Upper lobe of right lung (tissue), 1 donor: ENCODE measurements at regions of chr3 and their contacts with region 1.

Region 1: DNA sequence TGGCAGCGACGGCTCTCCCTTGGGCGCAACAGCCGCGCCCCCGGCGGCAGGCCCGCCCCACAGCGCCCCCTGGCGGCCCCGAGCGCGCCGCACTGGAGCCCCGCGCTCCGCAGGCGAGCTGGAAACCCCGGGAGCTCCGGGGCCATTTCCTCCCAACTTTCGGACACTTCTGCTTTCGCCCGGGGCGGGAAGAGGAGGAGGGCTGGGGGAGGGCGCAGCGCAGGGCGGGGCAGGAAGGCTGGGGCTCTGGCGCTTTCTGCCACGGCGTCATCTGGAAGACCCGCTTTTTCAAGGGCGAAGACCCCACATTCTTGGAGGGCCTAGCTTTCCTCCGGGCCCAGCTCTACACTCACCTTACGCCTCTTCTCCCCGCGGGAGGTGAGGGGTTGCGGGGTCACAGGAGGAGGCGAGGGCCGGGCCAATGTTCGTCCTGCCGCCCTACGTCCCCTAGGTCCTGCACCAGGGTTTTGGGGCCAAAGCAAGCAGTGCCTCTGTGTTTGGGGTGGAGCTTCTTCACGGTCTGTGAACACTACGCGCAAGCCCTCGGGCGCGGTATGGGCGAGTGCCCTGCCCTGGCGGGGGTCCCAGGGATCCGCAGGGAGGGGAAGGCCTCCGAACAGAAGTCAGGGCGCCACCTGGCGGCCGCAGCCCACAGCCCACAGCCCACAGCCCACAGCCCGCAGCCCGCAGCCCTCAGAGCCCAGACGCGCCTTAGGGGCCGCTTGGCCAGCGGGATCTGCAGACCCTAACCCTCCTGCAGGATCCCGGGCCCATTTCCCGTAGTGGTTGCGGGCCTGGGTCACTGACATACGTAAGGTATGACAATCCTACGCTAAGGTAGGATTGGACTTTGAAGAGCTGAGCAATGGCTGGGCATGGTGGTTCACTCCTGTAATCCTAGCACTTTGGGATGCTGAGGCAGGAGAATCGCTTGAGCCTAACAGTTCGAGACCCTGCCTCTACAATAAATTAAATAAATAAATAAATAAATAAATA is 31.1 kb downstream of the FOXL2 start:
- DNase-seq: peak; percentile 97
- ATAC-seq: peak; percentile 96
- H3K4me3 ChIP-seq: peak overlapping the region; percentile 93
- H3K27ac ChIP-seq: peak overlapping the region; percentile 98
- H3K4me1 ChIP-seq: peaks cover 14% of the 10 kb centered on the region
- H3K27me3 ChIP-seq: no peaks in the 10 kb centered on the region
- CTCF ChIP-seq: peak; percentile 83

Region 2: GRCh38 chr3:138594150-138594934 is 321.5 kb before region 1 on chr3 and contains the start of gene CEP70:
- intact Hi-C with region 1: loop called (anchors 10 kb)
- DNase-seq: peak; percentile 97
- ATAC-seq: peak; percentile 97
- H3K4me3 ChIP-seq: peak within 1 kb of the TSS; percentile 86
- H3K27ac ChIP-seq: peak within 1 kb of the TSS; percentile 90
- H3K4me1 ChIP-seq: peaks cover 6% of the 10 kb centered on the region
- H3K27me3 ChIP-seq: no peaks in the 10 kb centered on the region
- CTCF ChIP-seq: peak; percentile 86
- total RNA-seq, gene CEP70: 46.3 TPM

Region 3: GRCh38 chr3:138640537-138640936 is 275.3 kb before region 1 on chr3:
- intact Hi-C with region 1: no loop called
- DNase-seq: no peak
- ATAC-seq: no peak
- H3K4me3 ChIP-seq: no peak overlapping the region
- H3K27ac ChIP-seq: no peak overlapping the region
- H3K4me1 ChIP-seq: no peaks in the 10 kb centered on the region
- H3K27me3 ChIP-seq: no peaks in the 10 kb centered on the region
- CTCF ChIP-seq: no peak

Region 4: GRCh38 chr3:138705675-138706074 is 210.1 kb before region 1 on chr3:
- intact Hi-C with region 1: loop called (anchors 10 kb)
- DNase-seq: no peak
- ATAC-seq: no peak
- H3K4me3 ChIP-seq: no peak overlapping the region
- H3K27ac ChIP-seq: no peak overlapping the region
- H3K4me1 ChIP-seq: no peaks in the 10 kb centered on the region
- H3K27me3 ChIP-seq: no peaks in the 10 kb centered on the region
- CTCF ChIP-seq: no peak

Region 5: DNA sequence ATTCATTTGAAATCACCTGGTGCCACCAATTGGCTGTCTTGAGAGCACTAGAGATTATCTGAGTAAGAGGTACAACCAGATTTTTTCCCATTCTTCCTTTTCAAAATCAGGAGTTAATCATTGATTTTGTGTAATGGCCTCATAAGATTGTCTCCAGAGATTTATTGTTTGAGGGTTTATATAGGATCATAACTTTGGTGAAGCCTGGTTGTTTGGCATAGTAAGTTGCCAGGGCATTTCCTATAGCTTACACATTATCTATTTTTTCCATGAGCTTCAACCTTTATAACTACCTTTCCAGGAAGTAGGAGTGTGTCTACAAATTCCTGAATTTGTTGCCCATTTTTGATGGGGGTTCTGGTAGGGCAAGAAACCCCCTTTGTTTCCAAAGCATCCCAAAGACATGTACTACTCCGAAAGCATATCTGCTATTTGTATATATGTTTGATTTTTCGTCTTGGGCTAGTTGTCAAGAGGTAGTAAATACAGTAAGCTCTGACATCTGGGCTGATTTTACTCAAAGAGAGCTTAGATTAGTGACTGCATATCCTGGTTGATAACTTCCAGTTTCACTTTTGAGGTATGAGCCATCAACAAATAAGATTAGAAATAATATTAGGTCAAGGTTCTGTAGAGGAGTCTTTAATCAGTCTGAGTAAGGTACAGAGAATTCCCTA is 116.7 kb after region 1 on chr3:
- intact Hi-C with region 1: no loop called
- DNase-seq: no peak
- ATAC-seq: no peak
- H3K4me3 ChIP-seq: no peak overlapping the region
- H3K27ac ChIP-seq: no peak overlapping the region
- H3K4me1 ChIP-seq: no peaks in the 10 kb centered on the region
- H3K27me3 ChIP-seq: no peaks in the 10 kb centered on the region
- CTCF ChIP-seq: no peak